Activated CD8-positive, alpha-beta T cell treated with anti-CD3 and anti-CD28 coated beads, Interleukin-2, amount 10 ng/mL, durations not matched to agents 7 days and 5 days (primary cell): ENCODE measurements at regions of chr7 and their contacts with region 1.

Region 1: GRCh38 chr7:38318803-38319416 is 45.5 kb upstream of the TARP start:
- DNase-seq: no peak
- ATAC-seq: peak; percentile 56
- H3K4me3 Mint-ChIP-seq: peak overlapping the region; percentile 71
- H3K27ac Mint-ChIP-seq: peak overlapping the region; percentile 76
- H3K4me1 Mint-ChIP-seq: peaks cover 55% of the 10 kb centered on the region
- H3K27me3 Mint-ChIP-seq: no peaks in the 10 kb centered on the region

Region 2: GRCh38 chr7:38107486-38107893 is 211.4 kb before region 1 on chr7:
- CTCF ChIA-PET with region 1: interaction called, 17 read pairs
- POLR2A ChIA-PET with region 1: no interaction called
- DNase-seq: peak; percentile 78
- ATAC-seq: peak; percentile 88
- H3K4me3 Mint-ChIP-seq: no peak overlapping the region
- H3K27ac Mint-ChIP-seq: no peak overlapping the region
- H3K4me1 Mint-ChIP-seq: no peaks in the 10 kb centered on the region
- H3K27me3 Mint-ChIP-seq: peaks cover 27% of the 10 kb centered on the region

Region 3: DNA sequence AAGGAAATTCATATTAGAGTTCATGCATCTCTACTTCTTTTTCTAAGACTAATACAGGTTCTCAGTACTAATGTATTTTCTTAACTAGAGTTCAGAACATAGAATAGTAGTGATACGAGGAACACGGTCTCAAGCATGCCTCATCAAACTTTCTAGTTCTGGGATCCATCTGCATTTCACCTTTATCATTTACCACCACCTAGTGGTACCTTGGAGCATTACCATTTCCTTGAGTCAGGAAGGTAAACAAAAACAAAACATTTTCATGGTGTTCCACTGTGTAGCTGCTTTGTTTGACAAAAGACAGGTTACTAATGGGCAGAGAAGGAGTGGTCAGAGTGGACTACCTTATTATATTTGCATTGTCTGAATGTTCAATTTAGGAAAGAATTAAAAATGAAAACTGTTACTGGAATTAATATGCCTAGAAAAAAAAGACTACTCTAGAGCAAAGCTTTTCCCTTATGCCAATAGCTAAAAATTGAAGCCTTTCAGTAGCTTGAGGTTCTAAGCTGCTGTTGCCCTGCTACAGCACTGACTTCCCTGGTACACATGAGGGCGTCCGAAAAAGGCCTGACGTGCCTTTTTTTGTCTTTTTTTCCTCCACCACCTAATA is 96.3 kb before region 1 on chr7:
- CTCF ChIA-PET with region 1: interaction called, 116 read pairs
- POLR2A ChIA-PET with region 1: no interaction called
- DNase-seq: peak; percentile 57
- ATAC-seq: peak; percentile 56
- H3K4me3 Mint-ChIP-seq: no peak overlapping the region
- H3K27ac Mint-ChIP-seq: no peak overlapping the region
- H3K4me1 Mint-ChIP-seq: peaks cover 76% of the 10 kb centered on the region
- H3K27me3 Mint-ChIP-seq: no peaks in the 10 kb centered on the region

Region 4: GRCh38 chr7:38306914-38307313 is 12.0 kb before region 1 on chr7:
- CTCF ChIA-PET with region 1: interaction called, 19 read pairs
- POLR2A ChIA-PET with region 1: interaction called, 4 read pairs
- DNase-seq: peak; percentile 56
- ATAC-seq: peak; percentile 54
- H3K4me3 Mint-ChIP-seq: peak overlapping the region; percentile 60
- H3K27ac Mint-ChIP-seq: peak overlapping the region; percentile 92
- H3K4me1 Mint-ChIP-seq: peaks cover 59% of the 10 kb centered on the region
- H3K27me3 Mint-ChIP-seq: no peaks in the 10 kb centered on the region